ENCODE measurements at regions of chr12 and their contacts with region 1.

Region 1: DNA sequence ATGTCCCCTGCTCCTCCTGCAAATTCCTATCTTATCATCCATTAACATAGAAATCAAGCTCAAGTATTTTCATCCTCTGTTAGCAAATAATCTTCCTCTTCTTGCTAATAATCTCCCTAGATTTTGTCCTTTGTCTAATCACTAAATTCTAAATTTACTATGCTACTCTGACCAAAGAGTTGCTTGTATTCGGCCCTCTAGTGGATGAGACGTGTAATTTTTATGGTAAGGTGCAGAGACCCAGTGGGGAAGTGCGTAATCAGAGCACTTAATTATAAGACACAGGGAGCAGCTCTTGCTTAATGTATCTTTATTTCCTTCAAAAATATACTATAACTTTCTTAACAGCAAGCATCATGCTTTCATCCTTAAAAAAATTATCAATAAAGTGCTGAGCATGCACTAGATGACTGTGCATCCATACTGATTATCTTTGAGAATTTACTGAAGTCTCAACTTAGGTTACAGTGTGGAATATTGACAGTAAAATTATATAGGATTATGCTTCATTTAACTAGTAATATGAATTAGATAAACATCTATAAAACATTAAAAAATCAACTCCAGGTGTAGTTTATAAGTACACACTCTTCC is 212.6 kb downstream of the SLC16A7 start:
- DNase-seq: peak; percentile 54
- H3K4me3 ChIP-seq: no peak overlapping the region
- H3K27ac ChIP-seq: no peak overlapping the region
- H3K4me1 ChIP-seq: no peaks in the 10 kb centered on the region
- H3K27me3 ChIP-seq: no peaks in the 10 kb centered on the region
- CTCF ChIP-seq: peak; percentile 54 to 59
- POLR2A ChIP-seq: no peak

Region 2: GRCh38 chr12:59595883-59596540 is 212.4 kb before region 1 on chr12 and contains the start of gene SLC16A7:
- CTCF ChIA-PET with region 1: interaction called, 10 read pairs
- POLR2A ChIA-PET with region 1: no interaction called
- dilution Hi-C with region 1: no loop called
- intact Hi-C with region 1: loop called (anchors 10 kb)
- DNase-seq: peak; percentile 88
- H3K4me3 ChIP-seq: peak within 1 kb of the TSS; percentile 74 to 100 (median 99)
- H3K27ac ChIP-seq: peak within 1 kb of the TSS; percentile 81
- H3K4me1 ChIP-seq: peaks cover 12% of the 10 kb centered on the region
- H3K27me3 ChIP-seq: no peaks in the 10 kb centered on the region
- CTCF ChIP-seq: no peak
- POLR2A ChIP-seq: peak; percentile 51
- total RNA-seq, gene SLC16A7: 8.4 and 8.9 TPM in 2 replicates

Region 3: GRCh38 chr12:59736822-59737221 is 71.6 kb before region 1 on chr12:
- CTCF ChIA-PET with region 1: no interaction called
- POLR2A ChIA-PET with region 1: no interaction called
- dilution Hi-C with region 1: no loop called
- intact Hi-C with region 1: no loop called
- DNase-seq: peak; percentile 64
- H3K4me3 ChIP-seq: no peak overlapping the region
- H3K27ac ChIP-seq: no peak overlapping the region
- H3K4me1 ChIP-seq: peaks cover 7% of the 10 kb centered on the region
- H3K27me3 ChIP-seq: no peaks in the 10 kb centered on the region
- CTCF ChIP-seq: no peak
- POLR2A ChIP-seq: no peak

Measured in endothelial cell of umbilical vein (primary cell).